ENCODE measurements at regions of chr18 and their contacts with region 1.

Region 1: DNA sequence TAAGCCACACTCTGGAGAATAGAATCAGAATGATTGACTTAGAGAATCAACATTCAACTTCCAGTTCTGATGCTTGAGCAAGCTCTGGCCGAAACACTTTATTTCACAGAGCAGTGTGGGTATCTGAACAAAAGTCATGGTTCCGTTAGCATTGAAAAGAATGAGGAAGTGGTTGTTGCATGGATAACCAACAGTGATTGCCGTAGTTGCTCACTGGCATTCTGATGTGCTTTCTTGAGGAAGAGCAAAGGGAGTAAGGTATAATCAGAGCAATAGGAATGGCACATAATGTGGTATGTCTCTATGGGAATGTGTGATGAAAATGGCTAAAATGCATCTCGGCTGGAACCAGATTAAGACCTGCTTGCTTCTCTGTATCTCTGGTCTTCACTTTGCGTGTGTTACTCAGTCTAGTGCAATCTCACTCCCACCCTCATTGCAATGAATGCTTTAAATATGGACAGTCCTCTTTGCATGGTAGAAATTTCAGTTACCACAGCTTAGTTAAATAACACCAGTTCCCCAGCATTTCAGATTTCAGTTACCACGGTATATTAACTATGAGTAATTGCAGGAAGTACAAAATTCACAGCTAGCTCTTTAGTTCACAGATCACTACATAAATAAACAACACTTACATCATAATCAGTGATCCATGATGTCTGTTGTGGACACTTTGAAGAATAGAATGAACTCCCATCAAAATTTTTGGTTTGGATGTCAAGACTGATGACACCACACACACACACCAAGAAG is 7.8 kb upstream of the RAB12 start:
- DNase-seq: peak; percentile 75
- ATAC-seq: peak; percentile 74
- H3K4me3 ChIP-seq: peak overlapping the region in 1 of 5 experiments; percentile 32
- H3K4me3 Mint-ChIP-seq: peak overlapping the region; percentile 85
- H3K27ac ChIP-seq: peak overlapping the region; percentile 47 to 66
- H3K27ac Mint-ChIP-seq: peak overlapping the region; percentile 97
- H3K4me1 ChIP-seq: peaks cover 41 to 44% of the 10 kb centered on the region in 2 donors
- H3K4me1 Mint-ChIP-seq: peaks cover 53% of the 10 kb centered on the region
- H3K27me3 ChIP-seq: no peaks in the 10 kb centered on the region
- H3K27me3 Mint-ChIP-seq: no peaks in the 10 kb centered on the region
- CTCF ChIP-seq: no peak

Region 2: DNA sequence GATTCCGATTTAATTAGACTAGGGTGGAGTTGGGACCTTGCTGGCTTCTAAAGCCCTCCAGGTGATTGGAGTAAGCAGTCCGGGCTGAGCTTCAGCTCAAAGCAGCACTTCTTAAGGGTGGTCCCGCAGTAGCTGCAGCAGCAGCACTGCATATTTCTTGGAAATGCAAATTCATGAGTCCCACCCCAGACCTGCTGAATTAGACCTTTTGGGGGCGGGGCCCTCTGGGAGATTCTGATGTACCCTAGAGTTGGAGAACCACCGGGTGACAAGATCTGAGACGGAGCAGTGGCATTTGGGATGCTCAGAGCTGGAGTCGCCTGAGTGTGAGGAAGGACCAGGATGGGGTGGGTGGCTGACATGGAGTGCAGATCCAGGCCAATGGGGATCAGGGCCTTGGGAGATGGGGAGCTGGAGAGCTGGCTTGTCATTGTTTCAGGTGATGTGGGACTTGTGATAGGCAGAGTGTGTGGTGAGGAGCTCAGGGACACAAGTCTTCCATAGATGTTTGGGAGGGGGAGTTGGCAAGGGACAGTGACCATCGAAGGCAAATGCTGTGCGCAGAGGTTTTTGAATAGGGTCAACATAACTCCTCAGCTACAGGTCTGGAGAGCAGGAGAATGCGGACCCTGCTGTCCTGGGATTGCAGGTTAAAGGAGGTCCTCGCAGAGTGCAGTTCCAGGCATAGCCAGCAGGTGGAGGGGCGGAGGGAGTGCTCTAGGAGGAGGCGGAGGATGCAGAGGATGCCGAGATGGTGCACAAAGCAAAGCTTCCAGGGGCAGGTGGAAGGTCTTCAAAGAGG is 123.1 kb before region 1 on chr18:
- CTCF ChIA-PET with region 1: interaction called, 16 read pairs
- POLR2A ChIA-PET with region 1: no interaction called
- intact Hi-C with region 1: loop called (anchors 5 kb)
- DNase-seq: peak; percentile 74
- ATAC-seq: peak; percentile 80
- H3K4me3 ChIP-seq: no peak overlapping the region
- H3K4me3 Mint-ChIP-seq: no peak overlapping the region
- H3K27ac ChIP-seq: no peak overlapping the region
- H3K27ac Mint-ChIP-seq: no peak overlapping the region
- H3K4me1 ChIP-seq: no peaks in the 10 kb centered on the region
- H3K4me1 Mint-ChIP-seq: peaks cover 3% of the 10 kb centered on the region
- H3K27me3 ChIP-seq: peaks cover 0 to 7% (median 0%) of the 10 kb centered on the region in 4 experiments
- H3K27me3 Mint-ChIP-seq: peaks cover 47% of the 10 kb centered on the region
- CTCF ChIP-seq: peak; percentile 80

Region 3: DNA sequence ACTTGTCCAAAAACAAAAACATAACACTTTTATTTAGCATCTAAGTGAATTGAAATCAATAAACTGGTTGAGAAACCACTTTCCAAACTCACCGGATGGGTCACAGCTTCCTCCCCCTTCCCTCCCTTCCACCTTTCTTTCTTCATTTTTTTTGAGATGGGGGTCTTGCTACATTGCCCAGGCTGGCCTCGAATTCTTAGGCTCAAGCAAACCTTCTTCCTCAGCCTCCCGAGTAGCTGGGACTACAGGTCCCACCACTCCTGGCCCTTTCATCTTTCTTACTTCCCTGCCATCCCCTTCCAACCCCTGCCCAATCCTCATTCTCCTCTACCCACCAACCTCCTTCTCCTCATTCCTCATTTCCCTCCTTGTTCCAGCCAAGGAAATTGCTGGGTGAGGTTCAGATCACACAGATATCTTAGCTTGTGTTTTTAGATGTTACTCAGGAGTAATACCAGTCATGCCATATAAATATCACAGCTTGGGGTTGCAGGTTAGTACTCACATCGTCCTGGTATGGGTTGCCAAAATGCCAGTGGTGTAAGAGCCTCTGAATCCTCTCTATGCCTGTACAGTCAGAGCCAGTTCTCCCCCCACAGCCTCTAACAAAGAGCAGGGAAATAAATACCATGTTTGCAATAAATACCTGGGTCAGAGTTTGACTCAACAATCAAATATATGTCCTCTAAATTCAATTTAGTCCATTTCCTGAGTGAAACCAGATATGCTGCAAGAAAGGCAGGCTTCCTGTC is 368.4 kb after region 1 on chr18:
- CTCF ChIA-PET with region 1: no interaction called
- POLR2A ChIA-PET with region 1: no interaction called
- intact Hi-C with region 1: no loop called
- DNase-seq: no peak
- ATAC-seq: no peak
- H3K4me3 ChIP-seq: no peak overlapping the region
- H3K4me3 Mint-ChIP-seq: no peak overlapping the region
- H3K27ac ChIP-seq: no peak overlapping the region
- H3K27ac Mint-ChIP-seq: no peak overlapping the region
- H3K4me1 ChIP-seq: peaks cover 21 to 22% of the 10 kb centered on the region in 2 donors
- H3K4me1 Mint-ChIP-seq: peaks cover 24% of the 10 kb centered on the region
- H3K27me3 ChIP-seq: no peaks in the 10 kb centered on the region
- H3K27me3 Mint-ChIP-seq: peaks cover 3% of the 10 kb centered on the region
- CTCF ChIP-seq: no peak

Region 4: GRCh38 chr18:9117980-9118841 is 516.8 kb after region 1 on chr18:
- CTCF ChIA-PET with region 1: no interaction called
- POLR2A ChIA-PET with region 1: no interaction called
- intact Hi-C with region 1: loop called (anchors 5 kb)
- DNase-seq: peak; percentile 59
- ATAC-seq: peak; percentile 26
- H3K4me3 ChIP-seq: peak overlapping the region in 2 of 5 experiments; percentile 3 to 66
- H3K4me3 Mint-ChIP-seq: peak overlapping the region; percentile 88
- H3K27ac ChIP-seq: peak overlapping the region; percentile 82 to 99
- H3K27ac Mint-ChIP-seq: peak overlapping the region; percentile 98
- H3K4me1 ChIP-seq: peaks cover 56 to 86% of the 10 kb centered on the region in 2 donors
- H3K4me1 Mint-ChIP-seq: peaks cover 70% of the 10 kb centered on the region
- H3K27me3 ChIP-seq: no peaks in the 10 kb centered on the region
- H3K27me3 Mint-ChIP-seq: no peaks in the 10 kb centered on the region
- CTCF ChIP-seq: no peak

Region 5: DNA sequence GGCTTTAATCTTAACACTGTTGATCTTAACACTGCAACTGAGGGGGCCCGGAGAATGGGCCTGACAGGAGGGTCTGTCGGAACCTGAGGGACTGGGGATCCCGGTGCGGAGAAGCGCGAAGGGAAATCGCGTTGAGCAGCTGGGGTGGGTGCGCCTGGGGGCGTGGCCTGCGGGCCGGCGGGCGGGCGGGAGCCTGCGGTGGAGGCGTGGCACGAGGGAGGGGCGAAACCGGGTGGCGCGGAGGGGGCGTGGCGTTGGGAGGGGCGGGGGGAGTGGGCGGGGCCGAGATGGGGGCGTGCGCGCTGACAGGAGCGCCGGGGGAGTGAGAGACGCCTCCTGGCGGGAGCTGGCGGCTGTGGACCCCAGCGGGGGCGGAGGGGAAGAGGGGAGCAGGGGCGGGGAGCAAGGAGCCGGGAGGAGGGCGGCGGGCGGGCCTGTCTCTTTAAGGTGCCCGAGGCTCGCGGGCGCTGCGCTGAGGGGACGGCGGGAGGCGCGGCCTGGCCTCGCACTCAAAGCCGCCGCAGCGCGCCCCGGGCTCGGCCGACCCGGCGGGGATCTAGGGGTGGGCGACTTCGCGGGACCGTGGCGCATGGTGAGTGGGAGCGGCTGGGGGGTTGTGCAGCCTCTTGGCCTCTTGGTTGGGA is 733.0 kb after region 1 on chr18 and contains the start of gene TWSG1:
- CTCF ChIA-PET with region 1: no interaction called
- POLR2A ChIA-PET with region 1: no interaction called
- intact Hi-C with region 1: loop called (anchors 5 kb)
- DNase-seq: peak; percentile 94
- ATAC-seq: peak; percentile 93
- H3K4me3 ChIP-seq: peak within 1 kb of the TSS; percentile 59 to 88 (median 71)
- H3K4me3 Mint-ChIP-seq: peak within 1 kb of the TSS; percentile 95
- H3K27ac ChIP-seq: peak within 1 kb of the TSS in 1 of 2 donors; percentile 65
- H3K27ac Mint-ChIP-seq: peak within 1 kb of the TSS; percentile 82
- H3K4me1 ChIP-seq: peaks cover 6 to 19% of the 10 kb centered on the region in 2 donors
- H3K4me1 Mint-ChIP-seq: peaks cover 20% of the 10 kb centered on the region
- H3K27me3 ChIP-seq: peaks cover 0 to 2% (median 0%) of the 10 kb centered on the region in 4 experiments
- H3K27me3 Mint-ChIP-seq: peaks cover 3% of the 10 kb centered on the region
- CTCF ChIP-seq: peak; percentile 44
- total RNA-seq, gene TWSG1: 5.5 and 6.3 TPM in 2 replicates